Sigmoid colon (tissue), 7 donors: ENCODE measurements at regions of chr2 and their contacts with region 1.

Region 1: DNA sequence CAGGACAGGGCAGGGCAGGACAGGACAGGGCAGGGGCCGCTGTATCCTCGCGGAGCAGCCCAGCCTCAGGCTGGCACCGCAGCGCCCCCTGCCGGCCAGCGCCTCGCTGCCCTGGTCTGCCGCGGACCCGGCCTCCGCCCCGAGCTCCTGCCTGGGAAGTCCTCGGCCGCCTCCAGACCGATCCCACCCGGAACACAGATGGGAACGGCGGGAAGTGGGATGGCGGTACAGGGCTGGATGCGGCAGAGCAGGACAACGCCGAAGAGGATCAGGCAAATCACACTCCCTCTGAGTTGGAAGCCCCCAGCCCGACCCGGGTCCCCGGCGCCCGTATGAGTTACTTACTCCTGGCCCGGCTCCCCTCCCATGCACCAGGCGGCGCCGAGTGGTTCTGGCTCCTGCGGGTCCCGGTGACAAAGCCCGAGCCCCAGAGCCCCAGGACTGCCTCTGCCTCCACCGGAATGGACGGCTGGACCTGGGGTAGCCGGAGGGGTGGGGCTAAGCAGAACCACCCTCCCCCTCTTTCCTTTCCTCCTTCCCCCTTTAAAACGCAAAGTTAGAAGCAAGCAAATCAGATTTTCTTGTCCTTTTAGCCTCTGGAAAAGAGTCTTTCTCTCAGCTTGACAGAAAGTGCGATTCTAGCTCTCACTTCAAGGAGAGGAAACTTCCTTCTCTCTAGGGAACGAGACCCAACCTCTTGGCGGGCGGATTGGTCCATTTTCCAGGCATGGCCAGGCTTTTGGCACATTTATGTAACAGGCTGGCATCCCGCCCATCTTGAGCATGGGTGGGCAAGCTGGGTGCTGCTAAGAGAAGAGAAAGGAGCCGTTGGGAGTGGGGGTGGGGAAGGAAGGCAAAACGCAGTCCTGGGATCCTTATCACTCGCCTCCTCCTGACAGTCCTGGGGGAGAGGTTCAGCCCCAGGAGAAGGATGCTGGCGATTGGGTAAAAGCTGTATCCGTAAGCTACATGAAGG is at the start of gene TP53I3:
- DNase-seq: peak; percentile 94
- H3K4me3 ChIP-seq: peak within 1 kb of the TSS; percentile 46 to 64 (median 55)
- H3K27ac ChIP-seq: peak within 1 kb of the TSS; percentile 82 to 95 (median 92)
- H3K4me1 ChIP-seq: peaks cover 0 to 18% (median 13%) of the 10 kb centered on the region in 4 donors
- H3K27me3 ChIP-seq: no peaks in the 10 kb centered on the region
- CTCF ChIP-seq: peak; percentile 96 to 98 (median 98)
- EP300 ChIP-seq: no peak
- POLR2A ChIP-seq: peak; percentile 62 to 73
- total RNA-seq, gene TP53I3: 3.6 to 27.7 (median 16.8) TPM

Region 2: DNA sequence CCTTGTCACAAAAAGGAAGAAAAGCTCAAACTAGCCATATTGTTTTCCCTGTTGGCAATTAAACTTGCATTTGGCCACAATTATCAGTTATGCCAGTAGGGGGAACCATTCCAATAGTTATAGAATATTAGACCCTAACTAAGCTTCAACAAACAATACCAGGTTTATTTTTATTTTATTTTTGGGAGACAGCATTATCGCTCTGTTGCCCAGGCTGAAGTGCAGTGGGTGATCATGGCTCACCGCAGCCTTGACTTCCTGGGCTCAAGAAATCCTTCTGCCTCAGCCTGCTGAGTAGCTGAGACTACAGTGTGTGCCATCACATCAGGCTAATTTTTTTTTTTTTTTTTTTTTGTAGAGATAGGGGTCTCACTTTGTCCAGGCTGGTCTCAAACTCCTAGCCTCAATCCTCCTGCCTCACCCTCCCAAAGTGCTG is 259.9 kb before region 1 on chr2:
- intact Hi-C with region 1: loop called (anchors 5 kb)
- DNase-seq: no peak
- H3K4me3 ChIP-seq: no peak overlapping the region
- H3K27ac ChIP-seq: no peak overlapping the region
- H3K4me1 ChIP-seq: no peaks in the 10 kb centered on the region
- H3K27me3 ChIP-seq: no peaks in the 10 kb centered on the region
- CTCF ChIP-seq: peak; percentile 47 to 62 (median 60)
- EP300 ChIP-seq: no peak
- POLR2A ChIP-seq: no peak

Region 3: GRCh38 chr2:23926750-23927571 is 157.7 kb before region 1 on chr2 and contains the start of gene ATAD2B:
- intact Hi-C with region 1: loop called (anchors 1 kb)
- DNase-seq: peak; percentile 95
- H3K4me3 ChIP-seq: peak within 1 kb of the TSS; percentile 66 to 93 (median 82)
- H3K27ac ChIP-seq: peak within 1 kb of the TSS; percentile 93 to 99 (median 95)
- H3K4me1 ChIP-seq: peaks cover 0 to 38% (median 28%) of the 10 kb centered on the region in 4 donors
- H3K27me3 ChIP-seq: no peaks in the 10 kb centered on the region
- CTCF ChIP-seq: peak; percentile 47 to 84 (median 51)
- EP300 ChIP-seq: no peak
- POLR2A ChIP-seq: peak; percentile 58 to 85
- total RNA-seq, gene ATAD2B: 19.7 to 22.5 (median 21.0) TPM

Region 4: GRCh38 chr2:23976883-23977282 is 107.8 kb before region 1 on chr2:
- intact Hi-C with region 1: no loop called
- DNase-seq: no peak
- H3K4me3 ChIP-seq: no peak overlapping the region
- H3K27ac ChIP-seq: no peak overlapping the region
- H3K4me1 ChIP-seq: no peaks in the 10 kb centered on the region
- H3K27me3 ChIP-seq: no peaks in the 10 kb centered on the region
- CTCF ChIP-seq: no peak
- EP300 ChIP-seq: no peak
- POLR2A ChIP-seq: no peak

Region 5: GRCh38 chr2:24123195-24123921 is 38.7 kb after region 1 on chr2 and contains the starts of genes FAM228B and PFN4:
- intact Hi-C with region 1: loop called (anchors 2 kb)
- DNase-seq: peak; percentile 95
- H3K4me3 ChIP-seq: peak within 1 kb of the TSS; percentile 46 to 68 (median 66)
- H3K27ac ChIP-seq: peak within 1 kb of the TSS; percentile 88 to 94 (median 92)
- H3K4me1 ChIP-seq: peaks cover 0 to 32% (median 15%) of the 10 kb centered on the region in 4 donors
- H3K27me3 ChIP-seq: no peaks in the 10 kb centered on the region
- CTCF ChIP-seq: no peak
- EP300 ChIP-seq: no peak
- POLR2A ChIP-seq: no peak
- total RNA-seq, gene FAM228B: 24.7 to 44.1 (median 37.2) TPM
- total RNA-seq, gene PFN4: 1.9 TPM in 1 of 4 donors, not detected in the others